ENCODE measurements at regions of chr19 and their contacts with region 1.

Region 1: GRCh38 chr19:41785653-41786052 is 10.7 kb upstream of the CEACAM3 start:
- DNase-seq: peak; percentile 94 to 97 (median 96)
- H3K4me3 ChIP-seq: peak overlapping the region in 6 of 7 experiments; percentile 38 to 66 (median 59)
- H3K27ac ChIP-seq: no peak overlapping the region
- H3K4me1 ChIP-seq: peaks cover 8 to 38% (median 21%) of the 10 kb centered on the region in 4 experiments
- H3K27me3 ChIP-seq: no peaks in the 10 kb centered on the region

Region 2: DNA sequence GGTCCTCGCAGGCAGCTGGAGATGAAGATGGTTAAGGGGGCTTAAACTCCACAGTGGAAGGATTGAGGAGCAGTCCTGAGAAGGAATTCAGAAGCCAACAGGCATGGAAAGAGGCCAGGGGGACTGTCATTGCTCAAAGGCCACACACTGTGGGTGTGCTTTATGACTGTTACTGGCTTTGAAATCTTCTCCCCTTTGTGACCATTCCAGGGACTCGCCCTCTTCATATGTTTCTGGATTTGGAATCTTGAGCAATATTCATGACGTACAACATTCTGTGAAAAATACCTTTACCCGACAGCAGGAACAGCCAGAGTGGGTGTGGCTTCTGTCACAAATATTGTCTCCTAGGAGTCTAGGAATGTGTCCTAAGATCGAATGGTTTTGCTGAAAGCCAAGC is 114.2 kb before region 1 on chr19:
- CTCF ChIA-PET with region 1: no interaction called
- POLR2A ChIA-PET with region 1: no interaction called
- DNase-seq: no peak
- H3K4me3 ChIP-seq: no peak overlapping the region
- H3K27ac ChIP-seq: no peak overlapping the region
- H3K4me1 ChIP-seq: no peaks in the 10 kb centered on the region
- H3K27me3 ChIP-seq: peaks cover 5 to 54% (median 16%) of the 10 kb centered on the region in 5 experiments

Region 3: DNA sequence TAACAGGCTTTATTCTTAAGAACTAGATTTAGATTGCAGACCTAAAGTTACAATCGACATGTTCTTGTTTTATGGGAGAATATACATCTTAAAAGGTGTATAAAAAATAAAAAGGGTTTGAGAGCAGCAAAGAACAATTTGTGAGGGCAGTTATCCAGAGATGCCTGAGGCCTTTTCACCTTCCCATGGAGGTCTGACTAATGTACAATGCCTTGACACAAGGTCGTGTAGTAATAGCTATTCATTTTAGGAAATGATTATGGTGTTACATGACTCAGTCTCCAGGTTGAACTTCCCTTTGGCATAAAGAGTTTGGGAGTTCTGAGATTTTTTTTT is 10.3 kb before region 1 on chr19:
- CTCF ChIA-PET with region 1: interaction called, 18 read pairs
- POLR2A ChIA-PET with region 1: no interaction called
- DNase-seq: no peak
- H3K4me3 ChIP-seq: no peak overlapping the region
- H3K27ac ChIP-seq: no peak overlapping the region
- H3K4me1 ChIP-seq: peaks cover 0 to 12% (median 7%) of the 10 kb centered on the region in 4 experiments
- H3K27me3 ChIP-seq: no peaks in the 10 kb centered on the region

Measured in common myeloid progenitor, CD34-positive (primary cell).